GM12878 (cell line): ENCODE measurements at regions of chr2 and their contacts with region 1.

Region 1: DNA sequence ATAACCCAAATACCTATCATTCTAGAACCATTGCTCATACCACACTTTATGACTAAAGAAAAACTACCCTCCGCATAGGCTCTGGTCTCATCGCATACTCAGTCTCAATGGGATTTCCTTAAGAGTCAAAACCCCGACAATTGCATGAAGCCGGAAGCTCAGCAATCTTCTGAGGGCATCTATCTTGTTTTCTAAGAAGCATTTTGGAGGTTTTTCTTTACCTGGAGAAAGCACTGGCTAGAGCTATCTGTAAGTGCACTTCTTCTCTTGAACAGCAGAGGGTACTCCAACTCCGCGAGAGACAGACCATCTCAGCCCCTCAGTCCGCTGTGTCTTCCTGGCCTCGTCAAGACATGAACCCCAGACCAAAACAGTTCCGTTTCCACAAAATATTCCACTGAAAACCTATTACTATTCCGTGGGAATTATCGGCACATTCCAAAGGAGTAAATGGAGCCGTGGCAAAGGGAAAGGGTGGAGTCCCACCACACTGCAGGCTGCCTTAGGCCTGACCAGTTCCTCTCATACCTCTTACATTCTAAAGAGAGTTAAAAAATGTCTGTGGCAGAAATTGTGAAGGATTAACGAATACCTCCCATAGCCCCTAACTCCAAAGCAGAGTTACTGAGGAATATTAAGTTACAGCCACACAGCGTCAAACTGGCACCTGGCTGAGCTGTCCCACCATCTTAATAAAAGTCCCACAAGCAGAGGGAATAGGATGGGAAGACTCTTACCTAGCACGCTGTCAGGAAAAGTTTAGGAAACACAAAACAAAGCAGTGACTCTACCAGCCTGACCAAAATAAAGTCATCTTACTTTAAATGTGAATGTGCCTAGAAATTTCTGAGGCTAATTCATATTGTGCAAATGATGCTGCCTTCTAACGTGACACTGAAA is 325.6 kb upstream of the VRK2 start:
- DNase-seq: peak; percentile 47
- ATAC-seq: peak; percentile 99
- H3K4me3 ChIP-seq: no peak overlapping the region
- H3K27ac ChIP-seq: no peak overlapping the region
- H3K4me1 ChIP-seq: no peaks in the 10 kb centered on the region
- H3K27me3 ChIP-seq: no peaks in the 10 kb centered on the region
- CTCF ChIP-seq: peak; percentile 91
- EP300 ChIP-seq: no peak
- POLR2A ChIP-seq: no peak
- RAD21 ChIP-seq: peak; percentile 93

Region 2: GRCh38 chr2:57497489-57498096 is 223.4 kb before region 1 on chr2:
- CTCF ChIA-PET with region 1: no interaction called
- POLR2A ChIA-PET with region 1: no interaction called
- RAD21 ChIA-PET with region 1: no interaction called
- SMC1A ChIA-PET with region 1: no interaction called
- in situ Hi-C with region 1: no loop called
- intact Hi-C with region 1: no loop called
- DNase-seq: peak; percentile 4
- ATAC-seq: peak; percentile 92
- H3K4me3 ChIP-seq: no peak overlapping the region
- H3K27ac ChIP-seq: no peak overlapping the region
- H3K4me1 ChIP-seq: no peaks in the 10 kb centered on the region
- H3K27me3 ChIP-seq: no peaks in the 10 kb centered on the region
- CTCF ChIP-seq: peak; percentile 72 to 80 (median 76)
- EP300 ChIP-seq: no peak
- POLR2A ChIP-seq: no peak
- RAD21 ChIP-seq: peak; percentile 90

Region 3: GRCh38 chr2:57677296-57677695 is 43.7 kb before region 1 on chr2:
- CTCF ChIA-PET with region 1: no interaction called
- POLR2A ChIA-PET with region 1: no interaction called
- RAD21 ChIA-PET with region 1: no interaction called
- SMC1A ChIA-PET with region 1: no interaction called
- in situ Hi-C with region 1: no loop called
- intact Hi-C with region 1: no loop called
- DNase-seq: no peak
- ATAC-seq: no peak
- H3K4me3 ChIP-seq: no peak overlapping the region
- H3K27ac ChIP-seq: no peak overlapping the region
- H3K4me1 ChIP-seq: no peaks in the 10 kb centered on the region
- H3K27me3 ChIP-seq: no peaks in the 10 kb centered on the region
- CTCF ChIP-seq: no peak
- EP300 ChIP-seq: no peak
- POLR2A ChIP-seq: no peak
- RAD21 ChIP-seq: no peak

Region 4: DNA sequence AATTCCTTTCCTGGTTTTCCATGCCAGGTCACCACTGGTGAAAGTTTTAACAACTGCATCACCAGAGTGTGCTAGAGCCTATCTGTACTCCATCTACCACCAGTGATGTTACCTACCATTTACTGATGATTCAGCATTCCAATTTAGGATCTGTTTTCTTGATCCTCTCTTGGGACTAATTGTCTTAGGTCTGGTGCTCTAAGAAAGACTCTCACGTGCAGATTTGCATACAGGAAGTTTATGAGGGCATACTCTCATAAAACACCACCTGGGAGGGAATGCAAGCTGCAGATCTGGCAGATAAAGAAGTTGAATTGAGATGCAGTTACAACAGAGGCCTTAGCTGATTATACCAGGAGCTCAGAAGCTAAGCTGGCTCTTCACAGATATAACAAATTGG is 22.0 kb before region 1 on chr2:
- CTCF ChIA-PET with region 1: interaction called, 10 read pairs
- POLR2A ChIA-PET with region 1: no interaction called
- RAD21 ChIA-PET with region 1: no interaction called
- SMC1A ChIA-PET with region 1: interaction called, 4 read pairs
- in situ Hi-C with region 1: no loop called
- intact Hi-C with region 1: no loop called
- DNase-seq: no peak
- ATAC-seq: peak; percentile 27; the same call in 1 of the 3 replicates
- H3K4me3 ChIP-seq: no peak overlapping the region
- H3K27ac ChIP-seq: no peak overlapping the region
- H3K4me1 ChIP-seq: no peaks in the 10 kb centered on the region
- H3K27me3 ChIP-seq: no peaks in the 10 kb centered on the region
- CTCF ChIP-seq: no peak
- EP300 ChIP-seq: no peak
- POLR2A ChIP-seq: no peak
- RAD21 ChIP-seq: no peak

Region 5: GRCh38 chr2:58436872-58437271 is 715.9 kb after region 1 on chr2:
- CTCF ChIA-PET with region 1: interaction called, 3 read pairs
- POLR2A ChIA-PET with region 1: no interaction called
- RAD21 ChIA-PET with region 1: no interaction called
- SMC1A ChIA-PET with region 1: no interaction called
- in situ Hi-C with region 1: no loop called
- intact Hi-C with region 1: loop called (anchors 5 kb)
- DNase-seq: no peak
- ATAC-seq: no peak
- H3K4me3 ChIP-seq: no peak overlapping the region
- H3K27ac ChIP-seq: no peak overlapping the region
- H3K4me1 ChIP-seq: no peaks in the 10 kb centered on the region
- H3K27me3 ChIP-seq: no peaks in the 10 kb centered on the region; a peak in 1 of 4 replicates
- CTCF ChIP-seq: no peak
- EP300 ChIP-seq: no peak
- POLR2A ChIP-seq: no peak
- RAD21 ChIP-seq: no peak

Region 6: GRCh38 chr2:58553937-58554336 is 833.0 kb after region 1 on chr2:
- CTCF ChIA-PET with region 1: interaction called, 10 read pairs
- POLR2A ChIA-PET with region 1: no interaction called
- RAD21 ChIA-PET with region 1: no interaction called
- SMC1A ChIA-PET with region 1: no interaction called
- in situ Hi-C with region 1: no loop called
- intact Hi-C with region 1: no loop called
- DNase-seq: no peak
- ATAC-seq: peak; percentile 59; the same call in 2 of the 3 replicates
- H3K4me3 ChIP-seq: no peak overlapping the region
- H3K27ac ChIP-seq: no peak overlapping the region
- H3K4me1 ChIP-seq: no peaks in the 10 kb centered on the region
- H3K27me3 ChIP-seq: peaks cover 0 to 7% of the 10 kb centered on the region in 2 experiments; a peak in 1 of 4 replicates
- CTCF ChIP-seq: peak; percentile 22 to 46 (median 25); a peak in 3 of 6 replicates
- EP300 ChIP-seq: no peak
- POLR2A ChIP-seq: no peak
- RAD21 ChIP-seq: peak; percentile 59

Region 7: DNA sequence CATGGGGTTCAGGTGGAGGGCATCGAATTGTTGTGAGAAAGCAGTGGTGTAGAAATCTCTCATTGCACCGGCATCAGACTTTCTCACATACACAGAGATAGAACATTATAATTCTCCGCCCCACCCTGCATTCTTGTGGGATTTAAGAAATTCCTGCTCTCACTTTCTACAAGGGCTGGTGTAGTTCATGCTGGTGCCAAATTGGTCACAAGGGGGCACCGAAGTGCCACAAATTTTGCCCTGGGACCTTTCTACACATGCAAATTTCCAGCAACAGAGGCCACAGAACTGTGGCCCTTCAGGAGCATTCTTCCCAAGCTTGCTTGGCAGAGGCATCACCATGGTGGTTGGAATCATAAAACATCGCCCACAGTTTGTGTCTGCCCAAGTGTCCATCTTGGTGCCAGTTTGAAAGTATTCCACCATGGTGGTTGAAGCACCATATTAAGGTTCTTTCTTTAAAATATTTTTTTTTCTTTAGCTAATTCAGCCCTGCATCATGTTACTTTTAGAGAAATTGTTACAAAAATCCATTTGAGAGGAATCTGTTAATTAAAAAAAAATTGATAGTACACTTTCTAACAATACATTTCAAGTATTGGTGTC is 1041.3 kb after region 1 on chr2:
- CTCF ChIA-PET with region 1: no interaction called
- POLR2A ChIA-PET with region 1: no interaction called
- RAD21 ChIA-PET with region 1: no interaction called
- SMC1A ChIA-PET with region 1: no interaction called
- in situ Hi-C with region 1: no loop called
- intact Hi-C with region 1: loop called (anchors 2 kb)
- DNase-seq: no peak
- ATAC-seq: peak; percentile 87
- H3K4me3 ChIP-seq: no peak overlapping the region
- H3K27ac ChIP-seq: no peak overlapping the region
- H3K4me1 ChIP-seq: no peaks in the 10 kb centered on the region
- H3K27me3 ChIP-seq: no peaks in the 10 kb centered on the region; a peak in 1 of 4 replicates
- CTCF ChIP-seq: peak; percentile 58 to 68 (median 62); a peak in 5 of 6 replicates
- EP300 ChIP-seq: no peak
- POLR2A ChIP-seq: no peak
- RAD21 ChIP-seq: peak; percentile 80

Region 8: DNA sequence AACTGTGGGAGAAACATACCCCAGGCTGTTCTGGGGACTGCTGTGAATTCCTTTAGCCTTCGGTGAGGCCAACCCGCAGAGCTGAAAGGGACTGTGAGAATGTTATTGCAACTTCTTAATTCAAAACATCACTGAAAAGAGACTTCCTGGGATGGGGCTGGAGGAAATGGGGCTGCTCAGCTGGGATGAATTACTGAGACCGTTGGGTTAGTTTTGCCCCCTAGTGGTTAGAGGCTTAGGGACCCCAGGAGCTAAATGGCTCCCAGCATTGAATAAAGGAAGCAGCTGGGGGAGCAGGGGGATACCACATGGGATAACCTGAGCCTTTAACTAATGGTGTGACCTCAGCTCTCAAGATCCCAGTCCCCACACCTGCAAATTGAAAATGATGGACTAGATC is 1461.3 kb after region 1 on chr2:
- CTCF ChIA-PET with region 1: no interaction called
- POLR2A ChIA-PET with region 1: no interaction called
- RAD21 ChIA-PET with region 1: no interaction called
- SMC1A ChIA-PET with region 1: no interaction called
- in situ Hi-C with region 1: no loop called
- intact Hi-C with region 1: loop called (anchors 10 kb)
- DNase-seq: no peak
- ATAC-seq: peak; percentile 66
- H3K4me3 ChIP-seq: no peak overlapping the region
- H3K27ac ChIP-seq: no peak overlapping the region
- H3K4me1 ChIP-seq: no peaks in the 10 kb centered on the region
- H3K27me3 ChIP-seq: no peaks in the 10 kb centered on the region; a peak in 1 of 4 replicates
- CTCF ChIP-seq: peak; percentile 33 to 56 (median 49); a peak in 4 of 6 replicates
- EP300 ChIP-seq: no peak
- POLR2A ChIP-seq: no peak
- RAD21 ChIP-seq: peak; percentile 37; the same call in 1 of the 2 replicates